Spleen (tissue), 13 donors: ENCODE measurements at regions of chrX and their contacts with region 1.

Region 1: GRCh38 chrX:111244235-111244750 is 26.0 kb downstream of the CAPN6 start:
- DNase-seq: no peak
- H3K4me3 ChIP-seq: no peak overlapping the region
- H3K27ac ChIP-seq: no peak overlapping the region
- H3K4me1 ChIP-seq: no peaks in the 10 kb centered on the region
- H3K27me3 ChIP-seq: peaks cover 0 to 9% (median 0%) of the 10 kb centered on the region in 7 donors
- CTCF ChIP-seq: peak in 8 of 11 experiments; percentile 27 to 51 (median 41)
- POLR2A ChIP-seq: no peak

Region 2: GRCh38 chrX:110992611-110993010 is 251.7 kb before region 1 on chrX:
- intact Hi-C with region 1: loop called (anchors 10 kb)
- DNase-seq: no peak
- H3K4me3 ChIP-seq: no peak overlapping the region
- H3K27ac ChIP-seq: no peak overlapping the region
- H3K4me1 ChIP-seq: no peaks in the 10 kb centered on the region
- H3K27me3 ChIP-seq: peaks cover 0 to 7% (median 0%) of the 10 kb centered on the region in 7 donors
- CTCF ChIP-seq: peak in 6 of 11 experiments; percentile 5 to 44 (median 38)
- POLR2A ChIP-seq: no peak

Region 3: GRCh38 chrX:111490688-111491087 is 246.4 kb after region 1 on chrX:
- intact Hi-C with region 1: no loop called
- DNase-seq: no peak
- H3K4me3 ChIP-seq: no peak overlapping the region
- H3K27ac ChIP-seq: no peak overlapping the region
- H3K4me1 ChIP-seq: no peaks in the 10 kb centered on the region
- H3K27me3 ChIP-seq: no peaks in the 10 kb centered on the region
- CTCF ChIP-seq: no peak
- POLR2A ChIP-seq: no peak